ENCODE measurements at regions of chr22 and their contacts with region 1.

Region 1: GRCh38 chr22:48594016-48594756 is 1233.5 kb downstream of the BRD1 start:
- DNase-seq: no peak
- H3K4me3 ChIP-seq: no peak overlapping the region
- H3K27ac ChIP-seq: no peak overlapping the region
- H3K4me1 ChIP-seq: no peaks in the 10 kb centered on the region
- H3K27me3 ChIP-seq: no peaks in the 10 kb centered on the region
- CTCF ChIP-seq: no peak

Region 2: DNA sequence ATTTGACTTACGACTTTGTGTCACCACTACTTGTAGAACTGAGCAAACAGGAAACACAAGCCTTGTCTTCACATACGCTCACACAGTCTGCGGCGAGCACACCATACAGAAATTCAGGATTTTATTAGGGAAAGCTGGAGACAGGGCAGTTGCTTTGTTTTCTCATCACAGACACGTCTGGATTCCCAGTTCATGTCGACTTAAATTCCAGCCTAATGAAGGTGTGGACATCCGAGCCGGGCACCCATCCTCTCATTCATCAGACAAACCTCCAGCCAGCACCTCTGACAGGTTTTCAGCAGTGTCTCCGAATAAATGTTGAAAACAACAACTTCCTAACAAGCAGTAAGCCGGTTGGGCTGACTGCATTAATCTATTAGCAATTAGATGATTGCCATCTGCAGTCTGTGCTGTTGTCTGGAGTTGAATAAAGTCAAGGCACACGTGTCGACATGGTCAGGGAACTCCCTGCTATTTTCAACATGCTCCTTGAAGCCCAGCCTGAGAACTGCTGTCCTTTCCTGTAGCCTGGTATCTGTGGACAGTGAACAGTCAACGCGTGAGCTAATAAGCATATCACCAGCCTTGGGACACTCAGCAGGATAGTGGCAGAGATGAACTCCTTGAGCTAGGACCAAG is 177.5 kb before region 1 on chr22:
- CTCF ChIA-PET with region 1: no interaction called
- dilution Hi-C with region 1: loop called (anchors 10 kb)
- in situ Hi-C with region 1: no loop called
- intact Hi-C with region 1: no loop called
- DNase-seq: no peak
- H3K4me3 ChIP-seq: no peak overlapping the region
- H3K27ac ChIP-seq: no peak overlapping the region
- H3K4me1 ChIP-seq: no peaks in the 10 kb centered on the region
- H3K27me3 ChIP-seq: no peaks in the 10 kb centered on the region
- CTCF ChIP-seq: no peak

Region 3: DNA sequence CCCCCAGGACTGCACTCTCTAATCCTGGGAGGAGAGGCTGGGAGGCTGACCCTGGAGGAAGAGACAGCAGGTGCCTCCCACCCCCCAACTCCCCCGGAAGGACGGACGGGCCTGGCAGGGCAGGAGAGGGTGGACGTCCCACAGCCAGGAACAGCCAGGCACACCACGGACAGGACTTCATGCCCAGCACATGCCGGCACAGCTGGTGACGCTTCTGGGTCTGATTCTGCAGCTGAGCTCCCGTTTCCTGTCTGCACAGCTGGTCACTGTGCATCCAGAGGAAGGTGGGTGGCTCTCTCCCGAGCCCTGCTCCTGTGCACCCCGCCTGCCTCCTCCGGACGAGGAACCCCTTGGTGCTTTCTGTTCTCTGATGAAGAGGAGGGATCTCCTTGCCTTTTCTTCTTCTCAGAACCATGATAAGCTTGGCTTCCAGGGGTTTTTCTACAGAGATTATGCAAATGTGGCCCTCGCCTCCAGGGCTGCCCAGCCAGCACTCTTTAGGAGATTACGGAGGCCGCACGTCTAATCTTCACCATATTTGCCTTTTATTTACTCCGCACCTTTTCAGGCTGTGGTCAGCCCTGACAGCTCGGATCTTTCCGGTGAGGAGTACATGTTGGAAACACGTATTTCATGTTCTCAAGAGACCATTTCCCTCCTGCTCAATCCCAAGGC is 62.3 kb before region 1 on chr22:
- CTCF ChIA-PET with region 1: no interaction called
- dilution Hi-C with region 1: loop called (anchors 5 kb)
- in situ Hi-C with region 1: no loop called
- intact Hi-C with region 1: no loop called
- DNase-seq: no peak
- H3K4me3 ChIP-seq: no peak overlapping the region
- H3K27ac ChIP-seq: no peak overlapping the region
- H3K4me1 ChIP-seq: no peaks in the 10 kb centered on the region
- H3K27me3 ChIP-seq: no peaks in the 10 kb centered on the region
- CTCF ChIP-seq: no peak

Region 4: GRCh38 chr22:48896766-48897644 is 302.8 kb after region 1 on chr22:
- CTCF ChIA-PET with region 1: no interaction called
- dilution Hi-C with region 1: loop called (anchors 10 kb)
- in situ Hi-C with region 1: no loop called
- intact Hi-C with region 1: no loop called
- DNase-seq: no peak
- H3K4me3 ChIP-seq: no peak overlapping the region
- H3K27ac ChIP-seq: no peak overlapping the region
- H3K4me1 ChIP-seq: no peaks in the 10 kb centered on the region
- H3K27me3 ChIP-seq: no peaks in the 10 kb centered on the region
- CTCF ChIP-seq: no peak